ENCODE measurements at regions of chr15 and their contacts with region 1.

Region 1: GRCh38 chr15:85689729-85690128 is 105.0 kb downstream of the KLHL25 start:
- DNase-seq: peak; percentile 46 to 88 (median 60)
- ATAC-seq: peak; percentile 86
- H3K4me3 ChIP-seq: peak overlapping the region; percentile 66
- H3K4me3 Mint-ChIP-seq: peak overlapping the region; percentile 97
- H3K27ac ChIP-seq: peak overlapping the region; percentile 77 to 84
- H3K27ac Mint-ChIP-seq: peak overlapping the region; percentile 93
- H3K4me1 ChIP-seq: peaks cover 51% of the 10 kb centered on the region
- H3K4me1 Mint-ChIP-seq: peaks cover 76% of the 10 kb centered on the region
- H3K27me3 ChIP-seq: no peaks in the 10 kb centered on the region
- H3K27me3 Mint-ChIP-seq: no peaks in the 10 kb centered on the region
- CTCF ChIP-seq: peak; percentile 6

Region 2: DNA sequence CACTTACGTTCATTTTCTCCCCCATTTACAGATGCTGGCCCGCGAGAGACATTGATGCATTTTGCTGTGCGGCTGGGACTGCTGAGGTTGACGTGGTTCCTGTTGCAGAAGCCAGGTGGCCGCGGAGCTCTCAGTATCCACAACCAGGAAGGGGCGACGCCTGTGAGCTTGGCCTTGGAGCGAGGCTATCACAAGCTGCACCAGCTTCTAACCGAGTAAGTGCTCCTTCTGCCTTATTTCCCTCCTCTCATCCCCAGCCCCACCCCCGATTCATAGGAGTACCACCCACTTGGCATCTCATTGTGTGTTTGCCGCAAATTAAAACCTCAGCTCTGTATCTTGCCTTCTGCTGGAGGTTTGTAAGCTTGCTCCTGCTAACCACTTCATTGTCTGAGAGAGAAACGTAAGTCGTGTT is 146.0 kb before region 1 on chr15:
- CTCF ChIA-PET with region 1: no interaction called
- POLR2A ChIA-PET with region 1: no interaction called
- intact Hi-C with region 1: loop called in 1 of 2 experiments (anchors 5 kb)
- DNase-seq: peak in 13 of 14 experiments; percentile 5 to 72 (median 37)
- ATAC-seq: peak; percentile 90
- H3K4me3 ChIP-seq: peak overlapping the region; percentile 18
- H3K4me3 Mint-ChIP-seq: peak overlapping the region; percentile 52
- H3K27ac ChIP-seq: no peak overlapping the region
- H3K27ac Mint-ChIP-seq: peak overlapping the region; percentile 77
- H3K4me1 ChIP-seq: peaks cover 14% of the 10 kb centered on the region
- H3K4me1 Mint-ChIP-seq: peaks cover 82% of the 10 kb centered on the region
- H3K27me3 ChIP-seq: no peaks in the 10 kb centered on the region
- H3K27me3 Mint-ChIP-seq: no peaks in the 10 kb centered on the region
- CTCF ChIP-seq: peak; percentile 19

Region 3: DNA sequence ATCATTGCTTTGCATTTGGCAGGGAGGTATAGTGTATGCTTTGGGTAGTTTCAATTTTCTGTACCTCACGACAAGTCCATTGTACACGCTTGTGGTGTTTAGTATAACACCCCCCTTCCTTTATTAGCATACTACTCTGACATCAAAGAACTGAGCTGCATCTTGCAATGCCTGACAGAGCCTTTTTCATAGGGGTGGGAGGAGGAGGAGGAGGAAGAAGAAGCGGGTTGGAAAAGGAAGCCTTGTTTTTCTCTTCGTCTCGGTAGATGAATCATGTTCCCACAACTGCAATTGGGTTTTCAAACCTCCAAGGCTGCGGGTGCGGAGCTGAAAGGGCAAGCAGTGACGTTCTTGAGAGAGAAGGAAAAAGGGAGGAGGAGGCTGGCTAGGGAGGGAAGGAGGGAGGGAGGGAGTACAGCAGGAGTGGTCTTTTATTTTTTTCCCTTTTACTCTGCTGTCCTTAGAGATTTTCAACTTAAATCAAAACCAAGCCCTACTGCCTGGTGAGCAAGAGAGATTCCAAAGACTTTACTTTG is 70.7 kb before region 1 on chr15:
- CTCF ChIA-PET with region 1: interaction called, 3 read pairs
- POLR2A ChIA-PET with region 1: interaction called, 9 read pairs
- intact Hi-C with region 1: loop called (anchors 5 kb)
- DNase-seq: peak in 12 of 14 experiments; percentile 15 to 81 (median 42)
- ATAC-seq: peak; percentile 80
- H3K4me3 ChIP-seq: peak overlapping the region; percentile 39
- H3K4me3 Mint-ChIP-seq: no peak overlapping the region
- H3K27ac ChIP-seq: peak overlapping the region; percentile 26 to 65
- H3K27ac Mint-ChIP-seq: no peak overlapping the region
- H3K4me1 ChIP-seq: peaks cover 41% of the 10 kb centered on the region
- H3K4me1 Mint-ChIP-seq: peaks cover 41% of the 10 kb centered on the region
- H3K27me3 ChIP-seq: no peaks in the 10 kb centered on the region
- H3K27me3 Mint-ChIP-seq: no peaks in the 10 kb centered on the region
- CTCF ChIP-seq: no peak

Region 4: DNA sequence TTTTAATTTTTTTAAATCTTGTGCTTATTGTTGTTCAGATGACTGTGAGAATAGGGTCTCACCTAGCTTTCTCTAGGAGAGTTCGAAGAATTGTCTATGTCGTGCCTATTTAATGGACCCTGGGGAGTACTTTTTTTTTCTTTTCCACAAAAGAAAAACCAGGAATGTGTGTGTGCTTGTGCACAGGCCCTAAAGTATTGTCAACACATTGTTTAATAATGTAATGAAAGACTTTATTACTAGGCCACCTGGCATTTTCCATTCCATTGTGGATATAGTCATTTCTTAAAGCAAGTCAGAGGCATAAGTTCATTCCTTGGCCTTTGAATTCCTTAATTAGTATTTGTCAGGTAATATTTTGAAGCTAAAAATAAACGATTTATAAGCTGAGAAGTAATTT is 30.9 kb before region 1 on chr15:
- CTCF ChIA-PET with region 1: interaction called, 3 read pairs
- POLR2A ChIA-PET with region 1: interaction called, 5 read pairs
- intact Hi-C with region 1: loop called in 1 of 2 experiments (anchors 5 kb)
- DNase-seq: no peak
- ATAC-seq: no peak
- H3K4me3 ChIP-seq: no peak overlapping the region
- H3K4me3 Mint-ChIP-seq: no peak overlapping the region
- H3K27ac ChIP-seq: no peak overlapping the region
- H3K27ac Mint-ChIP-seq: no peak overlapping the region
- H3K4me1 ChIP-seq: no peaks in the 10 kb centered on the region
- H3K4me1 Mint-ChIP-seq: no peaks in the 10 kb centered on the region
- H3K27me3 ChIP-seq: no peaks in the 10 kb centered on the region
- H3K27me3 Mint-ChIP-seq: no peaks in the 10 kb centered on the region
- CTCF ChIP-seq: no peak

Region 5: DNA sequence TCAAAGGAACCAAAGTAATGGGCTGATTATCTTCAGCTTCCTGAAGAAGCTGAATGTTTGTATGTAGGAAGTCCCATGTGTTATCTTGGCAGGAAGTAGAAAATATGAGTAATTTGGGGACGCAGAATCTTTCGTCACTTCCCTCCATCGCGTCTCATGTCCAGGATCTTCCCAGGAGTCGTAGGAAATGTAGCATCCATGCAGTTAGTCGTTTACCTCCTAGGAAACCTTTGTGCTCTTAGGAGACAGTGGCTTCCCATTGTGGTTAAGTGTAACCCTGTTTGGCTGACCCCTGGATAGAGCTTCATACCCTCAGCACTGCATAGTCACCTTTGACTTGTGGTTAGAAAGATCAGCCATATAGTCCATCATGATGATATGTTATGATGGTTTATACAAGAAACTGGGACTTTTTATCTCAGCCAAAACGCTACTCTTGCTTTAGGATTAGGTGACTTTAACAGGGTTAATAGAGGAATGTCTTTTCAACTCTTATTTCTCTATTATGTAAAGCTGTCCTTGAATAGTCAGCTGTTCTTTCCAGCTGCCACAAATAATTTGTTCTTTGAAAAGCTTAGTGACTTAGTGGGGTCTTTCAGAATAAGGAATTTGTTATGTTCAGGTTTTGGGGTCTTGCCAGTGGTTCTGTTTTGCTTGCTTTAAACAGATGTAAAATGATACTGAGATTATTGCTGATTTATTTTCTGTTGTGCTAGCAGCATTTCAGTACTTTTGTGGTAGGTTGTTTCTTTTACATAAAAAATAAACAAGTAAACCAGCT is 12.8 kb after region 1 on chr15:
- CTCF ChIA-PET with region 1: interaction called, 9 read pairs
- POLR2A ChIA-PET with region 1: interaction called, 83 read pairs
- intact Hi-C with region 1: loop called in 1 of 2 experiments (anchors 1 kb)
- DNase-seq: peak in 4 of 14 experiments; percentile 32 to 84 (median 78)
- ATAC-seq: peak; percentile 38
- H3K4me3 ChIP-seq: peak overlapping the region; percentile 27
- H3K4me3 Mint-ChIP-seq: peak overlapping the region; percentile 74
- H3K27ac ChIP-seq: peak overlapping the region; percentile 85 to 88
- H3K27ac Mint-ChIP-seq: peak overlapping the region; percentile 98
- H3K4me1 ChIP-seq: peaks cover 64% of the 10 kb centered on the region
- H3K4me1 Mint-ChIP-seq: peaks cover 80% of the 10 kb centered on the region
- H3K27me3 ChIP-seq: no peaks in the 10 kb centered on the region
- H3K27me3 Mint-ChIP-seq: no peaks in the 10 kb centered on the region
- CTCF ChIP-seq: no peak

Region 6: DNA sequence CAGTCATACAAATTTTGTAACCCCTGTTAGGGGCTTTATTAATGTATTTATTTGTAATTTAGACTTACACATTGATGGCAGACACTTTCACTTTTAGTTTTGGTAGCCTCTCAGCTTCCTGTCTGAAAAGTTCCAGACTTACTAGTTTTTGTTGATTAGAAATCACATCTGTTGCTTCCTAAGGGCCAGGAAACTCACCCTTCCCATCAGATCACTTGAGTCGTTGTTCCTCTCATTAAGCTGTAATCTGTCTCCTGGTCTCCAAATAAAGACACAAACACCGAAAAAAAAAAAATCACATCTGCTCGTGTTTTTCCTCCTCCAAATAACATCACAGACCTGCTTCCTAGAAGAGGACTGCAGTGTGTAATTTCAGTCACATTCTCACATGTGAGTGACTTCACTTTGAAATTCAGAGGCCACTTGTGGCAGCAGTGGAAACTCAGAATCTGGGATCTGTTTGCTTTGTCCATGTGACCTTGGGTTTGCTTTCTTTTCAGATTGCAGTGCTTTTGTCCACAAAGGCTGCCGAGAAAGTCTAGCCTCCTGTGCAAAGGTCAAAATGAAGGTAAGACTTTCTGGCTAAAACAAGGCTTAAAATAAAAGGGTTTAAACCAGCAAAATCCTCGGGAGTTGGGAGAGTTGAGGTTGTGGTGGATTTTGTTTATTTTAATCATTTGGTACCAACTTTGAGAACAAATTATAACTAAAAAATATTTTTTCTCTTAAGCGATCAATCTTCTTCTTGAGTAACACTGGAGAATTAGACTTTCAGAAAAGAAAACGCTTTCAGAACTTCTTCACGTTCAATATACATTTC is 18.0 kb after region 1 on chr15:
- CTCF ChIA-PET with region 1: interaction called, 9 read pairs
- POLR2A ChIA-PET with region 1: interaction called, 83 read pairs
- intact Hi-C with region 1: loop called in 1 of 2 experiments (anchors 1 kb)
- DNase-seq: peak in 2 of 14 experiments; percentile 56 to 80
- ATAC-seq: peak; percentile 39
- H3K4me3 ChIP-seq: peak overlapping the region; percentile 45
- H3K4me3 Mint-ChIP-seq: peak overlapping the region; percentile 75
- H3K27ac ChIP-seq: peak overlapping the region; percentile 80 to 88
- H3K27ac Mint-ChIP-seq: peak overlapping the region; percentile 98
- H3K4me1 ChIP-seq: peaks cover 54% of the 10 kb centered on the region
- H3K4me1 Mint-ChIP-seq: peaks cover 87% of the 10 kb centered on the region
- H3K27me3 ChIP-seq: no peaks in the 10 kb centered on the region
- H3K27me3 Mint-ChIP-seq: no peaks in the 10 kb centered on the region
- CTCF ChIP-seq: no peak